Uterus (tissue), 4 donors: ENCODE measurements at regions of chr9 and their contacts with region 1.

Region 1: DNA sequence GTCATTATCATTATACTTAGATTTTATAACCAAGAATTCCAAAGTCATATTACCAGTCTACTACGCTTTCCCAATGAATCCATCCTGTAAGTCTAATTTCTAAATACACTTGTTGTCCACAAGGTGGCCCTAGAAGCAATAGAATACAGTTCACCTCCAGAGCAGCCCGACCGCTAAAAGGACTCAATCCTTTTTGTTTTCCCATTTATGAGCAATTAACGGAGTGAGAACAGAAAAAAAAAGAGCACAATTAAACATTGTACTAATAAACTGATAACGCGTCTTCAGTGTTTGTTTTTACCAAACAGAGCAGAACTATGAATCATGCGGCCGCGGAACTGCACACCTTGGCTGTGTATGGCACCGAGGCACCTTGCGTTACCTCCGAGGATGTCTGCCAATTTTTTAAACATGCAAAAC is 160.7 kb upstream of the DAPK1 start:
- DNase-seq: peak in 1 of 2 donors; percentile 50
- H3K4me3 ChIP-seq: peak overlapping the region; percentile 25 to 33
- H3K27ac ChIP-seq: no peak overlapping the region
- H3K4me1 ChIP-seq: no peaks in the 10 kb centered on the region
- H3K27me3 ChIP-seq: no peaks in the 10 kb centered on the region
- CTCF ChIP-seq: peak; percentile 69 to 78 (median 76)
- POLR2A ChIP-seq: no peak

Region 2: DNA sequence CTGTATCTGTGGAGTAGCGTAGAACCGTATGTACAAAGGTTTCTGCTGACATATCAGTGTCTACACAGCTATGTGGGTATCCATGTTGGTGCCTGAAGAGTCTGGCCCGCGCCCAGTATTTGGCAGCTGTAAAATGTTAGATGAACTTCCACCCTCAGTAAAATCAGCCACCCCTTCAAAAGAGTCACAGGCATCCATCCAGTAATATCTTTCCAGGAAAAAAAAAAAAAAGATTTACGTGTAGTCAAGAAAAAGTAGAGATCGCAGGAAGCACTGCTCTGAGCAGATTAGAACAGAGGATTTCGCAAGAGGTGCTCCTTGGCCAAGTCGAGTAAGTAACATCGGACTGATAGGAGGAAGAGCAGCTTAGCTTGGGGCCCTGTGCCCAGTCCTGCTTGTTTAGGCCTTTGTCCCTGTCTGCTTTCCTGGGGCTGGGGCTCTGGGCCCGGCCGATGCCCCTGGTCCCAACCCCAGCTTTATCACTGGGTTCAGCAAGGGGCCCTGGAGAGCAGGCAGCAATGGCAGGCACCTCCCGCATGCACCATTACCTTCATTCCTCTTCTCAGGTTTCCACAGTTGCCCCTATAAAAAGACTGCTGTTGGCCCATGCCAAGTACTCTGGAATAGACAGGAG is 181.9 kb after region 1 on chr9:
- intact Hi-C with region 1: no loop called
- DNase-seq: peak; percentile 79 to 88
- H3K4me3 ChIP-seq: no peak overlapping the region
- H3K27ac ChIP-seq: peak overlapping the region; percentile 60 to 64
- H3K4me1 ChIP-seq: peaks cover 0 to 6% of the 10 kb centered on the region in 2 donors
- H3K27me3 ChIP-seq: no peaks in the 10 kb centered on the region
- CTCF ChIP-seq: no peak
- POLR2A ChIP-seq: no peak

Region 3: DNA sequence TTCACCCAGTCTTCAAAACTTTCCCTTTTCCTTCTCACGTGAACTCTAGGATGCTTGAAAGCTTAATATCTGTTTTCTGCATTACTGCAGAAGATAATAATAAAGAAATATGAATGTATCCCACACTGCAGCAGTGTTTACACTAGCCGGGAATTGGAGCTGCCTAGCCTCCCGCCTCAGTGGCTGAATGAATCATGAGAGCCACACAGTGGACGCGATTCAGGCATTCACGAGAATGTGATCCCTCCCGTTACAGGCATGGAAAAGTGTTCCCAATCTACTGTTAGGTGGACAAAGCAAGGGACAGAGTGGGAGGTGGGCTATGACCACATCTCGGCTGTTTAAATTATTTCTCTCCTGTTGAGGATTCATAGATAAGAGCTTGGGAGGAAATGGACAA is 319.6 kb after region 1 on chr9:
- intact Hi-C with region 1: loop called (anchors 5 kb)
- DNase-seq: no peak
- H3K4me3 ChIP-seq: no peak overlapping the region
- H3K27ac ChIP-seq: no peak overlapping the region
- H3K4me1 ChIP-seq: no peaks in the 10 kb centered on the region
- H3K27me3 ChIP-seq: no peaks in the 10 kb centered on the region
- CTCF ChIP-seq: peak in 1 of 4 experiments; percentile 13
- POLR2A ChIP-seq: no peak